ENCODE measurements at regions of chr1 and their contacts with region 1.

Region 1: DNA sequence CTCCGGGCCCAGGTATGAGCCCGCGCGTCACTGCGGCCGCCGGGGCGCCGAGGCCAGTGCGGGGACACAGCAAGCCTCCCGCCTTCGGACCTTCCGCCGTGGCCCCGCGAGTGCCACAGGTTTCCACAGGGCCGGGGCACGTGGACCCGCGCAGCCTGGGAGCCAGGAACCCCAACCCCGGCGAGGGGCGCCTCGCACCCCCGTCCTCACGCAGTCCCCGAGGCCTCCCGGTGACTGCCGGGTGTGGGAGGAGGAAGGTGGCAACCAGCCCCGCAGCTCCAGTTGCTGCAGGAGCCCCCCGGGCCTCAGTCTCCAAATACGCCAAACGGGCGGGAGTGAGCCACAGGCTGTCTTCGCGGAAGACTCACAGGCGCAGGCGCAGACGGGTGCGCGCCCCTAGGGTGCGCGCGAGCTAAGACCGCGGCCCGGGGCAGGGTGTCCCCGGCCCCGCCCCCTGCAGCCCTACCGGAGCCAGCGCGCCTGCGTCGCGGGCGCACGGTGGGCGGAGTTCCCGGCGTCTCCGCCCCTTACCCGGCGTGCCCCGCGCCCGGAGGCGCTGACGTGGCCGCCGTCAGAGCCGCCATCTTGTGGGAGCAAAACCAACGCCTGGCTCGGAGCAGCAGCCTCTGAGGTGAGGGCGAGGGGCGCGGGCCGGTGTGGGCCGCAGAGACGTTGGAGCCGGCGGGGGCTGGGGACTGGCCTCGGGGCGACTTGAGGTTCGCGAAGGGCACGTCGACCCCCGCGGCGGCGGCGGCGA is at the start of gene ARF1:
- DNase-seq: peak; percentile 93 to 96 (median 93)
- ATAC-seq: peak; percentile 88 to 95 (median 94)
- H3K4me3 ChIP-seq: peak within 1 kb of the TSS; percentile 67 to 100 (median 96)
- H3K27ac ChIP-seq: peak within 1 kb of the TSS; percentile 95 to 100 (median 99)
- H3K4me1 ChIP-seq: peaks cover 27 to 59% (median 48%) of the 10 kb centered on the region in 12 donors
- H3K27me3 ChIP-seq: no peaks in the 10 kb centered on the region
- CTCF ChIP-seq: peak in 6 of 12 donors; percentile 19 to 45 (median 30)
- POLR2A ChIP-seq: peak; percentile 67 to 90
- total RNA-seq, gene ARF1: 271 to 451 (median 310) TPM

Region 2: GRCh38 chr1:227723474-227723873 is 358.8 kb before region 1 on chr1:
- intact Hi-C with region 1: no loop called
- DNase-seq: no peak
- ATAC-seq: no peak
- H3K4me3 ChIP-seq: no peak overlapping the region
- H3K27ac ChIP-seq: no peak overlapping the region
- H3K4me1 ChIP-seq: peaks cover 0 to 12% (median 5%) of the 10 kb centered on the region in 12 donors
- H3K27me3 ChIP-seq: no peaks in the 10 kb centered on the region
- CTCF ChIP-seq: no peak
- POLR2A ChIP-seq: no peak

Region 3: GRCh38 chr1:228097328-228098081 is 15.2 kb after region 1 on chr1:
- intact Hi-C with region 1: loop called in 2 of 10 experiments (anchors 2 kb)
- DNase-seq: peak in 1 of 5 donors; percentile 18
- ATAC-seq: no peak
- H3K4me3 ChIP-seq: no peak overlapping the region
- H3K27ac ChIP-seq: no peak overlapping the region
- H3K4me1 ChIP-seq: peaks cover 0 to 53% (median 23%) of the 10 kb centered on the region in 12 donors
- H3K27me3 ChIP-seq: no peaks in the 10 kb centered on the region
- CTCF ChIP-seq: no peak
- POLR2A ChIP-seq: no peak

Region 4: DNA sequence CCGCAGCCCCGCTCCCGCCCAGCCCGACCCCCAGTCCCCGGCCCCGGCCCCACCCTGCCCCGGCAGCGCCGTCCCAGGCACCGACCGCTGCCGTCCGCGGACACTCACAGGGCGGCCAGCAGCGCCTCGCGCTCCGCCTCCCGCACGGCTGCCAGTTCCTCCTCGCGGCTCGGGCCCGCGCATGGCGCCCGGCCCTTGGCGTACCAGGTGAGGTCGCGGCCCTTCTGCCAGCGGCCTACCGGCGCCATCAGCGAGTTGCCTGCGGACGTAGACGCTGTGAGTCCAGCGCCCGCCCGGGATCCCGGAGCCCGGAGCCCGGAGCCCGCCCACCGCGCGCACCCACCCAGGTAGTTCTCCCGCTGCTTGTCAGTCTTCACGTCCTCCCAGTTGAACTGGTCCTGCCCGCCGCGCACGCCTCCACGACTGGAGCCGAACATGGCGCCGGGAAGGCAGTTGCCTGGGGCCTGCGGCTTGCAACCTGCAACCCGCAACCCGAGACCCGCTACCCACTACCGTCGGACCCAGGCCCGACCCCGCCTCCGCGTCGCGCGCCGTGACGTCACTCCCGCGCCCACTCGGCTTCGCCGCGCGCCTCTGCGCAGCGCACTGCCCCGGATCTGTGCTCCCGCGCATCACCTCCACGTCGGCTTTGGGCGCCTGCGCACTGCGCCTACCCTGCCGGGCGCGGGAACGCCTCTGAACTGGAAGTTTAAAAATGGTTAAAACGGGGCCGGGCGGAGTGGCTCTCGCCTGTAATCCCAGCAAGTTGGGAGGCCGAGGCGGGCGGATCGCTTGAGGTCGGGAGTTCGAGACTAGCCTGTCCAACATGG is 20.7 kb after region 1 on chr1 and contains the start of gene C1orf35:
- intact Hi-C with region 1: loop called in 5 of 10 experiments (anchors 2 kb)
- DNase-seq: peak; percentile 92 to 97 (median 94)
- ATAC-seq: peak; percentile 85 to 93 (median 88)
- H3K4me3 ChIP-seq: peak within 1 kb of the TSS; percentile 62 to 99 (median 92)
- H3K27ac ChIP-seq: peak within 1 kb of the TSS; percentile 55 to 97 (median 89)
- H3K4me1 ChIP-seq: peaks cover 0 to 42% (median 25%) of the 10 kb centered on the region in 12 donors
- H3K27me3 ChIP-seq: no peaks in the 10 kb centered on the region
- CTCF ChIP-seq: no peak
- POLR2A ChIP-seq: peak in 1 of 2 donors; percentile 61
- total RNA-seq, gene C1orf35: 6.2 to 8.4 (median 7.2) TPM

Region 5: DNA sequence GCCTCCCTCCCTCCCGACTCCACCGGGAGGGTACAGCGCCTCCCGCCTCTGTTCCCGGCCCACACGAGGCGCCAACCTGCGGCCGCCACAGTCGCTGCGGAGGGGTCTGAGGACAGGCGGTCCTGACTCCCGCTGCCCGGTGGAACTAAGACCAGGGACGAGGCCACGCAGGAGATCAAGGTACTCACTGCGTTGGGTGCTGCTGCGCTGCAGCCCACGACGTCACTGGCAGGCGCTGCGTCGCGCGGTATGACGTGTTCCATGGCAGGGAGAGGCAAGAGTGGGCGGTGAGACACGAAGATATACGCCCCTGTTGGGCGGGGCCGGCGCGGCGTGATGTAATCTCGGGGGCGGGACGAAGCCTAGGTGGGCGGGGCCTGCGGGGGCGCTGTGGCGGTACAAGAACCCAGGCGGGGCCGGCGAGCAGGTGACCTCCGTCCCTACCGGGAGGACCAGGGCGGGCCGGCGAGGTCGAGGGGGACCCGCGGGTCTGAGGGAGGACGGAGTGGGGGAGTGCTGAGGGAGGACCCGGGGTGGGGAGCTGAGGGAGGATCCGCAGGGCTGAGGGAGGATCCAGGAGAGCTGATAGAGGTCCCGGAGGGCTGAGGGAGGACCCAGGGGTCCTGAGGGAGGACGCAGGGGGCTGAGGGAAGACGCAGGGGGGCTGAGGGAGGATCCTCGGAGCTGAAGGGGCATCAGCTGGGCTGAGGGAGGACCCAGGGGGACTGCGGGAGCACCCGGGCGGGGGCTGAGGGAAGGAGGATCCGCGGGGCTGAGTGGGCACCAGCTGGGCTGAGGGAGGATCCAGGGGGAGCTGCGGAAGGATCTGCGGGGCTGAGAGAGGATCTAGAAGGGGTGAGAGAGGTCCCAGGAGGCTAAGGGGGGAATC is 27.0 kb after region 1 on chr1 and contains the start of gene MRPL55:
- intact Hi-C with region 1: loop called in 3 of 10 experiments (anchors 2 kb)
- DNase-seq: peak; percentile 96 to 98 (median 97)
- ATAC-seq: peak; percentile 94 to 98 (median 95)
- H3K4me3 ChIP-seq: peak within 1 kb of the TSS; percentile 65 to 99 (median 92)
- H3K27ac ChIP-seq: peak within 1 kb of the TSS; percentile 53 to 95 (median 88)
- H3K4me1 ChIP-seq: peaks cover 5 to 31% (median 20%) of the 10 kb centered on the region in 12 donors
- H3K27me3 ChIP-seq: no peaks in the 10 kb centered on the region
- CTCF ChIP-seq: peak in 5 of 12 donors; percentile 4 to 38 (median 22)
- POLR2A ChIP-seq: peak; percentile 48 to 82
- total RNA-seq, gene MRPL55: 35.5 to 125 (median 51.2) TPM

Measured in heart left ventricle (tissue), 16 donors.